GM13976 (cell line): ENCODE measurements at regions of chr4 and their contacts with region 1.

Region 1: GRCh38 chr4:155442267-155443105 is 65.7 kb upstream of the MAP9 start:
- DNase-seq: peak; percentile 53
- CTCF ChIP-seq: peak; percentile 78

Region 2: GRCh38 chr4:155787113-155787710 is 344.7 kb after region 1 on chr4:
- in situ Hi-C with region 1: loop called (anchors 10 kb)
- DNase-seq: peak; percentile 65
- CTCF ChIP-seq: peak; percentile 50